Activated CD4-positive, alpha-beta T cell treated with anti-CD3 and anti-CD28 coated beads for 36 hours (primary cell): ENCODE measurements at regions of chr6 and their contacts with region 1.

Region 1: DNA sequence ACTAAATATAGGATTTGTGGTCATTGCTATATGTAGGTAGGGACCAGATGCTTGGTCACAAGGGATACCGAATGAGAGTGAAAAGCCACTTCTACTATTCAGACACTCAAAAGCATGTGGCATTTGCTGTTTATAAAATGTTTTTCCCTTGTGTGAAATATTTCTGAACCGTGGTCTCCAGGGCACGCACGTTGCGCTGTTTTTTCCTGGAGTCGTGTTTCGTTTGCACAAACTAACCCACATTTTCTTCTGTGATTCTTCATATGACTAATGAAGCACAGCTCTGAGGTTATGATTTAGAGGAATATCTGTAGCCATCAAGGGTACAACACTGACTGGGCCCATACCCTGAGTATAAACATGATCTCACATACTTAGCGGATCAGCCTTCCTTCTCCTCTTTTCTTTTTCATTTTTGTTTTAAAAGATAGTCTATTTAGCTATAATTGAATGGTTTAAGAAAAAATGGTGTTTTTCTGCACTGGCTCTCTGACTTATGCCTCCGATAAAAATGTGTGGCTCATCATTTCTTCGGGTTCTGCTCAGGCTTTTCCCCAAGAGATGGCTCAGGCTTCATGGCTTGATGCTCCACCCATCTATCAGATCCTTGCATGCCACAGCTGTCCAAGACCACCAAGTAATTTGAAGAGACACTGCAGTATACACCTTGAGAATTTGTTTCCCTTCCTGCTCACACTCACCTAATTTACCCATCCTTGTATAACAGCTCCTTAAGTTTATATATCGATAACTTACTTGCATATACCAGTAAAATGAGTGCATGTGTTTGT is 59.9 kb upstream of the HBS1L start:
- DNase-seq: peak; percentile 82
- ATAC-seq: peak; percentile 70
- H3K4me3 Mint-ChIP-seq: peak overlapping the region; percentile 54
- H3K27ac Mint-ChIP-seq: peak overlapping the region; percentile 95
- H3K4me1 Mint-ChIP-seq: peaks cover 79% of the 10 kb centered on the region
- H3K27me3 Mint-ChIP-seq: no peaks in the 10 kb centered on the region

Region 2: DNA sequence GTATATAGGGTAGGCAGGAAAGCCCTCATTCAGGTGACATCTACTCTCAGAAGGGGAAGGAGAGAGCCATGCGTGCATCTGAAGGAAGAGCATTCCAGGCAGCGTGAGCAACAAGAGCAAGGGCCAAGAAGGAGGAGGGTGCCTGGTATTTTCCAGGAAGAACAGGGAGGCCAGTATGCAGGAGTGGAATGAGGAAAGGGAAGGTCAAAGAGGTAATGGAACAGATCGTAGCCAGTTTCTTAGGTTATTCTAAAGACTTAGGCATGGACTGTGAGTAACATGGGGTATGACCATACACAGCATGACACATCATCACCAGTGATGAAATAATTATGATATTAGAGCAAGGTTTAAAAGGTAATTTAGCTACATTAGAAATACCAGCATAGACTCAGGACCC is 188.8 kb before region 1 on chr6:
- CTCF ChIA-PET with region 1: no interaction called
- POLR2A ChIA-PET with region 1: no interaction called
- intact Hi-C with region 1: no loop called
- DNase-seq: no peak
- ATAC-seq: no peak
- H3K4me3 Mint-ChIP-seq: no peak overlapping the region
- H3K27ac Mint-ChIP-seq: no peak overlapping the region
- H3K4me1 Mint-ChIP-seq: no peaks in the 10 kb centered on the region
- H3K27me3 Mint-ChIP-seq: no peaks in the 10 kb centered on the region

Region 3: DNA sequence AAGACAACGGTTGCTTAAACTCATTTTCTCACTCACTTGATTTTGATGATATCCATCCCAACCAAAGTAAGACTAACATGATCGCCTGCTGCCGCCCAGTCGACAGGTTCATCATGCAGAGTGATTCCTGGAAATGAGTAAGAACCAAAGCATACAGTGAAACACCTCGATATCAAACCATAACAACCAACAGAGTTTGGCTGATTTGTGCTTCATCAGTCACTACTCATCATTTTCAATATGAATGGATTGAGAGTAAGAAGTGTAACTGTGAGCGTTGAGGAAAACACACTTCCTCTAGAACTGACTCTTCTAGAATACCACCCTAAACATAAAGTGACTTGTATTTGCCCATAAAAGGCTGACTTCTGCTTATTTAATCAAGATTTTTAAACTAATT is 135.4 kb before region 1 on chr6:
- CTCF ChIA-PET with region 1: no interaction called
- POLR2A ChIA-PET with region 1: no interaction called
- intact Hi-C with region 1: loop called (anchors 1 kb)
- DNase-seq: peak; percentile 75
- ATAC-seq: peak; percentile 92
- H3K4me3 Mint-ChIP-seq: no peak overlapping the region
- H3K27ac Mint-ChIP-seq: peak overlapping the region; percentile 39
- H3K4me1 Mint-ChIP-seq: peaks cover 48% of the 10 kb centered on the region
- H3K27me3 Mint-ChIP-seq: no peaks in the 10 kb centered on the region

Region 4: DNA sequence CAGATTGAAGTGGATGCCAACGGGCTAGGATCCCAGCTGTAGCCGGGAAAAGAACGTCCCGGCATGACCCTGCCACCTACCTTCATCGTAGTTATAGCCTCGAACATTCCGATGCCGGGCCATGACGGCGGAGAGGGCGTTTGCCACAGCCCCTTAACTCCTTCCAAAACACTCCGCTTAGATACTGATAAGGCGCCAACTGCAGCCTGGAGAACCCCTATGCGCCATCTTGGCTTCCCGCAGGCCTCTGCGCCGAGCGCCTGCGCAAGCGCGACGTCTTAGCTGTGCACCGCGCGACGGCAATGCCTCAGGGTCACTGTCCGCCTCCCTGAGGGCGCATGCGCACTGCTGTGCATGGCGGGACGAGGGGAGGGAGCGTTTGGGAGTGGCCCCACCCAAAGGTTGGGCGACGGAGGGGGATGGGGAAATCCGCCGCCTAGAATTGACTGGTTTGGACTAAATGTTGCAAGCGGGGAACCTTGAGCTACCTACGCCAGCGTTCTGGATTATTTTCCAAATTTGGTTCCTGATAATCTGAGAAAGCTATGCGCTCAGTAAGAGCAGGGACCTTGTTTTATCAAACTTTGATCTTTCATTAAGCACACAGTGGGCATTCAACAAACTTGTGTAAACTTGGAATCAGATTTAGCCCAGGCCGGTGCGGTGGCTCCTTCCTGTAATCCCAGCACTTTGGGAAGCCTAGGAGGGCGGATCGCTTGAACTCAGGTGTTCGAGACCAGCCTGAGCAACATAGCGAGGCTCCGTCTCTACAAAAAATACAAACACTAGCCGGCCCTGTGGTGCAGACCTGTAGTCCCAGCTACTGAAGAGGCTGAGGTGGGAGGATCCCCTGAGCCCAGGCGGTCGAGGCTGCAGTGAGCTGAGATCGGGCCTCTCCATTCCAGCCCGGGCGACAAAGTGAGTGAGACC is 59.7 kb before region 1 on chr6 and contains the start of gene HBS1L:
- CTCF ChIA-PET with region 1: interaction called, 3 read pairs
- POLR2A ChIA-PET with region 1: interaction called, 6 read pairs
- intact Hi-C with region 1: loop called (anchors 1 kb)
- DNase-seq: peak; percentile 99
- ATAC-seq: peak; percentile 96
- H3K4me3 Mint-ChIP-seq: peak within 1 kb of the TSS; percentile 94
- H3K27ac Mint-ChIP-seq: peak within 1 kb of the TSS; percentile 96
- H3K4me1 Mint-ChIP-seq: peaks cover 22% of the 10 kb centered on the region
- H3K27me3 Mint-ChIP-seq: no peaks in the 10 kb centered on the region
- total RNA-seq, gene HBS1L: 133 to 141 TPM

Region 5: DNA sequence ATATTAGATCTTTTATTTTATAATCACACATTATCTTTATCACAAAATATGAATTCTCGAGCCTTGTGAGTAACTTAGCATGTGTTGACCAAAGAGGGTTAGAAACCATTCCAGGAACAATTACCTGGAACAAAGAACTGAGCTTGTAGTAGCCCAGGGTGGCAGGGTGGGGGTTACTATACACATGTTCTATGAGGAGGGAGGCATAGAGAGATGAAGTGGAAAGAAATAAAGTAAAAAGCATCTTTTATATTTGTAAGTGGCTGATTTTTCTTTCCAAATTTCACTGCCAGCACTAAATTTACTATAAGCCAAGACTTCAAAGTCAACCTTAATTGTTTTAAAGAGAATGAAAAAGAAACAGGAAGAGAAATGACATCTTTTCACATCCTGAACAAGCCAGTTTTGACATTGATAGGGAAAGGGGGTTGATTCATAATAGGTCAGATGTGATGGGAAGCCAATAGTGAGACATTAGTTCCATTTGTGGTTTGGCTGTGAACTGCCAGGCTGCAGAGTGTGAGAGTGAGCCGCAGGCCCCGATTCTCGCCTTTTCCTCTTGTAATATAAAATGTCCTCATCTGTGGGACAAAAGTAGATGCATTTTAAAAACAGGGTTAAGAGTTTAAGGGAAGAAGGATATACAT is 13.8 kb after region 1 on chr6:
- CTCF ChIA-PET with region 1: interaction called, 4 read pairs
- POLR2A ChIA-PET with region 1: interaction called, 4 read pairs
- intact Hi-C with region 1: loop called (anchors 1 kb)
- DNase-seq: peak; percentile 83
- ATAC-seq: peak; percentile 97
- H3K4me3 Mint-ChIP-seq: peak overlapping the region; percentile 54
- H3K27ac Mint-ChIP-seq: peak overlapping the region; percentile 87
- H3K4me1 Mint-ChIP-seq: peaks cover 44% of the 10 kb centered on the region
- H3K27me3 Mint-ChIP-seq: no peaks in the 10 kb centered on the region

Region 6: DNA sequence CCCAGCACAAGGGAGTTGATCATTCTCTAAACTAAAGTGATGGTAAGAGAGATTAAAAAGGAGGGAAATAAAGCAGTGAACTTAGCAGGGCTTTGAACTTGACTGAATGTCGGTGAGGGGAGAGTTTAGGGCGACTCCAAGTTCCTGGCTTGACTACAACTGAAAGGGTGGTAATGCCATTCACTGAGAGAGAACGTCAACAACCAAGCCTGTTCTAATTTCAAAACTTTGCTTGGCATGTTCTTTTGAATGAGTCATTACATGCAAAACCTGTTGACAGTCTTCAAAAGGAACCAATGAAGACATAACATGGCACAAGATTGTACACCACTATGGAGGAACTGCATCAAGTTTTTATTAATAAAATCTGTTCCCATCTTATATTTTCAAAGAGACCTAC is 56.3 kb after region 1 on chr6:
- CTCF ChIA-PET with region 1: no interaction called
- POLR2A ChIA-PET with region 1: no interaction called
- intact Hi-C with region 1: loop called (anchors 1 kb)
- DNase-seq: peak; percentile 63
- ATAC-seq: peak; percentile 89
- H3K4me3 Mint-ChIP-seq: peak overlapping the region; percentile 20
- H3K27ac Mint-ChIP-seq: peak overlapping the region; percentile 88
- H3K4me1 Mint-ChIP-seq: peaks cover 25% of the 10 kb centered on the region
- H3K27me3 Mint-ChIP-seq: no peaks in the 10 kb centered on the region

Region 7: GRCh38 chr6:135438907-135439535 is 324.5 kb after region 1 on chr6:
- CTCF ChIA-PET with region 1: no interaction called
- POLR2A ChIA-PET with region 1: no interaction called
- intact Hi-C with region 1: no loop called
- DNase-seq: no peak
- ATAC-seq: peak; percentile 46
- H3K4me3 Mint-ChIP-seq: no peak overlapping the region
- H3K27ac Mint-ChIP-seq: peak overlapping the region; percentile 66
- H3K4me1 Mint-ChIP-seq: peaks cover 20% of the 10 kb centered on the region
- H3K27me3 Mint-ChIP-seq: no peaks in the 10 kb centered on the region